ENCODE measurements at regions of chr1 and their contacts with region 1.

Region 1: DNA sequence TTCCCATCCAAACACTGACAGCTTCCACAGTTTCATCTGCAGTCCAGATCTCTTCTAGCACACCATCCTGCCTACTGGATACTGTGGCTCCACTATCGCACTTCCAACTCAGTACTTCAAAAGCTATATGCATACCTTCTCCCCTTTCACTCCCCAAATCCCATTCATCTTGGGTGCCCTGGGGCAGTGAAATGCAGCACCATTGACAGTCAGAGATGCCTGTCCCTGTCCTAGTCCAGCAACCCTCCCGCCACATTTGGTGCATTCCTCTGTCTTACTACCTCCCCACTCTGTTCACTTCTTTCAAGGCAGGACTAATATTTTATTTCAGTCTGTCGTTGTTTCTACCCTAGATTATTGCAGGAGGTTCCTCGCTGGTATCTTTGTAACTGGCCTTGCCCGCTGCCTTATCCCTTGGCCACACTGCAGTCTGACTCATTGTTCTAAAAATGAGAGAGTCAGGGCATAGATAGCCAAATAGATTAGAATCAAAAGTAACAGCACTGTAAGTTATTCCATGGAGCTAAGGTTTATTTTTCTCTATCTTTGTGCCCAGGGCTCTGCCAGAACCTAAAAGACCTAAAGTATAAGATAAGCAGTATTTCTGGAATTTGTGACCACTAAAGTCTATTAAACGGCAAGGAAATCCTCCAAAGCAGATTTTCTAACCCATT is 96.7 kb downstream of the ESRRG start:
- DNase-seq: no peak
- ATAC-seq: no peak
- H3K4me3 ChIP-seq: no peak overlapping the region
- H3K27ac ChIP-seq: no peak overlapping the region
- H3K4me1 ChIP-seq: no peaks in the 10 kb centered on the region
- H3K27me3 ChIP-seq: no peaks in the 10 kb centered on the region; the same call in 1 of the 2 replicates
- CTCF ChIP-seq: no peak

Region 2: DNA sequence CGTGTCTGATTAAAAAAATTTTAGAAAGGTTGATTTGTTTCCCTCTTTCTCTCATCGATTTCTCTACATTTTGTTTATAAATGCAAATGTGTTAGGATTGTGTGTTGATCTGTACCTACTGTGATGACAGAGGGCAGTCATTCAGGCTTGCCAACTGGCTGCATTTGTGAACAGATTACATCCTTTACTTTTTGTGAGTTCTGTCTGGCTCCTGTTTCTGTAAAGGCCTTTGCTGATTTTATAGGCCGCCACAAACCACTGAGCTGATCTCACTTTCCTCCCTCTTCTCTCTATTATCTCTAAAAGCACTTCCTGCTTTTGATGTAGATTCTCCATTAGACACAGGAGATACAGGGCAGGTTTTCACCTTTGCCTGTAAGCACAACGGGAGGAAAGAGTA is 10.1 kb before region 1 on chr1:
- CTCF ChIA-PET with region 1: no interaction called
- POLR2A ChIA-PET with region 1: no interaction called
- in situ Hi-C with region 1: no loop called
- intact Hi-C with region 1: no loop called
- DNase-seq: no peak
- ATAC-seq: no peak
- H3K4me3 ChIP-seq: no peak overlapping the region
- H3K27ac ChIP-seq: no peak overlapping the region
- H3K4me1 ChIP-seq: no peaks in the 10 kb centered on the region
- H3K27me3 ChIP-seq: no peaks in the 10 kb centered on the region; the same call in 1 of the 2 replicates
- CTCF ChIP-seq: no peak

Region 3: GRCh38 chr1:216914974-216915373 is 288.4 kb after region 1 on chr1:
- CTCF ChIA-PET with region 1: interaction called, 10 read pairs
- POLR2A ChIA-PET with region 1: no interaction called
- in situ Hi-C with region 1: no loop called
- intact Hi-C with region 1: no loop called
- DNase-seq: no peak
- ATAC-seq: no peak
- H3K4me3 ChIP-seq: no peak overlapping the region
- H3K27ac ChIP-seq: no peak overlapping the region
- H3K4me1 ChIP-seq: no peaks in the 10 kb centered on the region
- H3K27me3 ChIP-seq: no peaks in the 10 kb centered on the region; the same call in 1 of the 2 replicates
- CTCF ChIP-seq: no peak